ENCODE measurements at regions of chr18 and their contacts with region 1.

Region 1: GRCh38 chr18:70709720-70710119 is 420.9 kb downstream of the SOCS6 start:
- H3K4me3 Mint-ChIP-seq: no peak overlapping the region
- H3K27ac Mint-ChIP-seq: no peak overlapping the region
- H3K4me1 Mint-ChIP-seq: no peaks in the 10 kb centered on the region
- H3K27me3 Mint-ChIP-seq: no peaks in the 10 kb centered on the region

Region 2: GRCh38 chr18:70762812-70763211 is 53.1 kb after region 1 on chr18:
- intact Hi-C with region 1: loop called (anchors 10 kb)
- H3K4me3 Mint-ChIP-seq: no peak overlapping the region
- H3K27ac Mint-ChIP-seq: no peak overlapping the region
- H3K4me1 Mint-ChIP-seq: no peaks in the 10 kb centered on the region
- H3K27me3 Mint-ChIP-seq: no peaks in the 10 kb centered on the region